GM12878 (cell line): ENCODE measurements at regions of chr1 and their contacts with region 1.

Region 1: GRCh38 chr1:110384581-110385321 is 6.1 kb downstream of the SLC16A4 start:
- DNase-seq: peak; percentile 45
- ATAC-seq: peak; percentile 90
- H3K4me3 ChIP-seq: peak overlapping the region; percentile 53; the same call in 1 of the 2 replicates
- H3K27ac ChIP-seq: peak overlapping the region; percentile 69
- H3K4me1 ChIP-seq: peaks cover 25% of the 10 kb centered on the region
- H3K27me3 ChIP-seq: no peaks in the 10 kb centered on the region
- CTCF ChIP-seq: no peak
- EP300 ChIP-seq: peak in 1 of 2 experiments; percentile 15; a peak in 1 of 4 replicates
- POLR2A ChIP-seq: peak; percentile 43
- RAD21 ChIP-seq: no peak

Region 2: GRCh38 chr1:110347182-110347893 is 37.4 kb before region 1 on chr1:
- CTCF ChIA-PET with region 1: interaction called, 13 read pairs
- POLR2A ChIA-PET with region 1: interaction called, 21 read pairs
- RAD21 ChIA-PET with region 1: interaction called, 35 read pairs
- SMC1A ChIA-PET with region 1: interaction called, 10 read pairs
- in situ Hi-C with region 1: no loop called
- intact Hi-C with region 1: no loop called
- DNase-seq: no peak
- ATAC-seq: peak; percentile 46
- H3K4me3 ChIP-seq: peak overlapping the region; percentile 47
- H3K27ac ChIP-seq: peak overlapping the region; percentile 23; the same call in 1 of the 2 replicates
- H3K4me1 ChIP-seq: peaks cover 10% of the 10 kb centered on the region
- H3K27me3 ChIP-seq: no peaks in the 10 kb centered on the region
- CTCF ChIP-seq: no peak
- EP300 ChIP-seq: no peak
- POLR2A ChIP-seq: peak; percentile 40; the same call in 1 of the 2 replicates
- RAD21 ChIP-seq: no peak

Region 3: GRCh38 chr1:110361856-110362255 is 22.9 kb before region 1 on chr1:
- CTCF ChIA-PET with region 1: no interaction called
- POLR2A ChIA-PET with region 1: interaction called, 6 read pairs
- RAD21 ChIA-PET with region 1: interaction called, 3 read pairs
- SMC1A ChIA-PET with region 1: interaction called, 4 read pairs
- in situ Hi-C with region 1: no loop called
- intact Hi-C with region 1: loop called (anchors 2 kb)
- DNase-seq: no peak
- ATAC-seq: no peak
- H3K4me3 ChIP-seq: no peak overlapping the region
- H3K27ac ChIP-seq: no peak overlapping the region
- H3K4me1 ChIP-seq: no peaks in the 10 kb centered on the region
- H3K27me3 ChIP-seq: no peaks in the 10 kb centered on the region
- CTCF ChIP-seq: no peak
- EP300 ChIP-seq: no peak
- POLR2A ChIP-seq: no peak
- RAD21 ChIP-seq: no peak

Region 4: GRCh38 chr1:110370827-110371226 is 13.9 kb before region 1 on chr1:
- CTCF ChIA-PET with region 1: interaction called, 5 read pairs
- POLR2A ChIA-PET with region 1: interaction called, 6 read pairs
- RAD21 ChIA-PET with region 1: interaction called, 3 read pairs
- SMC1A ChIA-PET with region 1: interaction called, 10 read pairs
- in situ Hi-C with region 1: no loop called
- intact Hi-C with region 1: no loop called
- DNase-seq: no peak
- ATAC-seq: peak; percentile 78
- H3K4me3 ChIP-seq: no peak overlapping the region
- H3K27ac ChIP-seq: no peak overlapping the region
- H3K4me1 ChIP-seq: no peaks in the 10 kb centered on the region
- H3K27me3 ChIP-seq: no peaks in the 10 kb centered on the region
- CTCF ChIP-seq: no peak
- EP300 ChIP-seq: no peak
- POLR2A ChIP-seq: no peak
- RAD21 ChIP-seq: no peak

Region 5: GRCh38 chr1:110407260-110408210 is 22.8 kb after region 1 on chr1 and contains the start of gene LAMTOR5:
- CTCF ChIA-PET with region 1: interaction called, 16 read pairs
- POLR2A ChIA-PET with region 1: interaction called, 9 read pairs
- RAD21 ChIA-PET with region 1: interaction called, 5 read pairs
- SMC1A ChIA-PET with region 1: interaction called, 18 read pairs
- in situ Hi-C with region 1: no loop called
- intact Hi-C with region 1: no loop called
- DNase-seq: peak; percentile 86
- ATAC-seq: peak; percentile 94
- H3K4me3 ChIP-seq: peak within 1 kb of the TSS; percentile 99
- H3K27ac ChIP-seq: peak within 1 kb of the TSS; percentile 85
- H3K4me1 ChIP-seq: peaks cover 10% of the 10 kb centered on the region
- H3K27me3 ChIP-seq: no peaks in the 10 kb centered on the region
- CTCF ChIP-seq: peak in 2 of 3 experiments; percentile 12 to 14; a peak in 2 of 6 replicates
- EP300 ChIP-seq: peak; percentile 22 to 49; a peak in 2 of 4 replicates
- POLR2A ChIP-seq: peak; percentile 97
- RAD21 ChIP-seq: peak; percentile 35; the same call in 1 of the 2 replicates
- polyA plus RNA-seq, gene LAMTOR5: 474 to 613 TPM

Region 6: DNA sequence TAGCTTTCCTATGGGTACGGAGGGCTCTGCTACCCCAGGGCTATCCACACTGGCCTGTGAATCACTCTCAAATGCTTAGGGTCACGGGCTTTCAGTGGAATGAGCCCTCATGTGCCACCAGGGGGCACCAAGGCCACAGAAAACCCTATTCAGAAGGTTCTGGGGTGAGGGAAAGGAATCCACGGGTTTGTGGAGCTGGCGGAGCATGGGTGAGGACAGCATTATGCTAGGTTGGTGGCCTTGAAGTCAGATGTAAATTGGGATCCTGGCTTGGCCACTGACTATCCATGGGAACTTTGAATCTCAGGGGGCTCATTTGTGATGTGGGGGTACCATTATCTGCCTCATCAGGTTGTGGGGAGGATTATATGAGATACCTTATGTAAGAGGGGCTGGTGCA is 27.8 kb after region 1 on chr1:
- CTCF ChIA-PET with region 1: interaction called, 16 read pairs
- POLR2A ChIA-PET with region 1: interaction called, 9 read pairs
- RAD21 ChIA-PET with region 1: interaction called, 5 read pairs
- SMC1A ChIA-PET with region 1: interaction called, 9 read pairs
- in situ Hi-C with region 1: no loop called
- intact Hi-C with region 1: no loop called
- DNase-seq: peak; percentile 24
- ATAC-seq: peak; percentile 88
- H3K4me3 ChIP-seq: no peak overlapping the region
- H3K27ac ChIP-seq: no peak overlapping the region
- H3K4me1 ChIP-seq: peaks cover 6% of the 10 kb centered on the region
- H3K27me3 ChIP-seq: peaks cover 0 to 2% of the 10 kb centered on the region in 2 experiments; a peak in 2 of 4 replicates
- CTCF ChIP-seq: peak; percentile 80 to 83 (median 83)
- EP300 ChIP-seq: no peak
- POLR2A ChIP-seq: no peak
- RAD21 ChIP-seq: peak; percentile 86